Activated CD4-positive, alpha-beta memory T cell treated with anti-CD3 and anti-CD28 coated beads for 36 hours (primary cell): ENCODE measurements at regions of chr13 and their contacts with region 1.

Region 1: GRCh38 chr13:40438999-40439797 is 227.2 kb downstream of the FOXO1 start:
- DNase-seq: peak; percentile 42
- H3K4me3 Mint-ChIP-seq: peak overlapping the region; percentile 59
- H3K27ac Mint-ChIP-seq: peak overlapping the region; percentile 71
- H3K4me1 Mint-ChIP-seq: peaks cover 34% of the 10 kb centered on the region
- H3K27me3 Mint-ChIP-seq: no peaks in the 10 kb centered on the region

Region 2: GRCh38 chr13:40251343-40252032 is 187.7 kb before region 1 on chr13:
- CTCF ChIA-PET with region 1: no interaction called
- POLR2A ChIA-PET with region 1: no interaction called
- intact Hi-C with region 1: loop called (anchors 5 kb)
- DNase-seq: peak; percentile 13
- H3K4me3 Mint-ChIP-seq: no peak overlapping the region
- H3K27ac Mint-ChIP-seq: peak overlapping the region; percentile 70
- H3K4me1 Mint-ChIP-seq: peaks cover 42% of the 10 kb centered on the region
- H3K27me3 Mint-ChIP-seq: no peaks in the 10 kb centered on the region

Region 3: DNA sequence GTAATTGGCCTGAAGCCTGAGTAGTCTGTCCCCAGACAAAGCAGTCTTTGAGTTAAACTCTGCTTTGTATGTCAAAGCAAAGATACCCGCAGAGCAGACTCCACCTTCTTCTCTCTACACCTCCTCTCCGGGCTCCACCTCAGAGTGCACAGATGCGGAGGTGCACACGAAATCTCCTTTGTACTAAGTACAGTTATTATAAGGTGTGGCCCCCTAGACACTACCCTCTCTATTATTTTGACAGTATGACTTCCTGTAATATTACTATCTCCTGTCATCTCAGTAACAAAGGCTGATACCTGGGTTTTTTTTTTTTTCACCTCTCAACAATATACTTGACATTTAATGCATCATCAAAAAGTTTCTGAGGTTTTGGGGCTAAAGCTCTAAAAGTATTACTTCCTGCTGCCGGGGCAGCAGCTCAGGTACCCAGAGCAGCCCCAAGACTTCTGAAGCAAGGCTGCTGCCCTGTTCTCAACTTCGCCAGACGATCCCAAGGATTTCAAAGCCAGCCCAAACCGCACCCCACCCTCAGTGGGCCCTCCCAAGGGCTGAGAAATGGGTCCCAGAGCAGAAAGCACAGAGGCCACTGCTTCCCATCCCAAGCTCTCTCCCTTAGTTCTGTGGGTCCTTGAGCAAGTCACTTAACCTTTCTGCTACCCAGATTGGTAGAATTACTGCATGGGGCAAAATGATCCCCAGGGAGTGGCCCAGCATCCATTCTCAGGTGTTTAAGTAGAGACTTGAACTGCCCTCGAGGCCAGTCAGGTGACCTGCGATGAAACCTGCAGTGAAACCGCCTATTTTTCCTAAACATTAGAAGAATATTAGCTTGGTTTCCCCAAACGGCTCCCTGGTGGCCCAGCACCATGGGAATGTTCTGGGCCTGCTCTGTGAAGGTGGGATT is 46.7 kb after region 1 on chr13:
- CTCF ChIA-PET with region 1: no interaction called
- POLR2A ChIA-PET with region 1: interaction called, 3 read pairs
- intact Hi-C with region 1: loop called (anchors 2 kb)
- DNase-seq: peak; percentile 81
- H3K4me3 Mint-ChIP-seq: peak overlapping the region; percentile 24
- H3K27ac Mint-ChIP-seq: peak overlapping the region; percentile 75
- H3K4me1 Mint-ChIP-seq: peaks cover 78% of the 10 kb centered on the region
- H3K27me3 Mint-ChIP-seq: no peaks in the 10 kb centered on the region

Region 4: GRCh38 chr13:40597740-40598370 is 158.7 kb after region 1 on chr13:
- CTCF ChIA-PET with region 1: no interaction called
- POLR2A ChIA-PET with region 1: no interaction called
- intact Hi-C with region 1: loop called (anchors 5 kb)
- DNase-seq: peak; percentile 24
- H3K4me3 Mint-ChIP-seq: peak overlapping the region; percentile 39
- H3K27ac Mint-ChIP-seq: peak overlapping the region; percentile 85
- H3K4me1 Mint-ChIP-seq: peaks cover 87% of the 10 kb centered on the region
- H3K27me3 Mint-ChIP-seq: no peaks in the 10 kb centered on the region